ENCODE measurements at regions of chr16 and their contacts with region 1.

Region 1: GRCh38 chr16:3431779-3432219 is 11.5 kb downstream of the ZNF597 start:
- DNase-seq: peak in 7 of 10 donors; percentile 14 to 92 (median 48)

Region 2: GRCh38 chr16:3389663-3390338 is 42.0 kb before region 1 on chr16:
- intact Hi-C with region 1: no loop called
- DNase-seq: no peak

Region 3: GRCh38 chr16:3413730-3414379 is 17.9 kb before region 1 on chr16:
- intact Hi-C with region 1: loop called (anchors 2 kb)
- DNase-seq: peak in 1 of 10 donors; percentile 76

Region 4: DNA sequence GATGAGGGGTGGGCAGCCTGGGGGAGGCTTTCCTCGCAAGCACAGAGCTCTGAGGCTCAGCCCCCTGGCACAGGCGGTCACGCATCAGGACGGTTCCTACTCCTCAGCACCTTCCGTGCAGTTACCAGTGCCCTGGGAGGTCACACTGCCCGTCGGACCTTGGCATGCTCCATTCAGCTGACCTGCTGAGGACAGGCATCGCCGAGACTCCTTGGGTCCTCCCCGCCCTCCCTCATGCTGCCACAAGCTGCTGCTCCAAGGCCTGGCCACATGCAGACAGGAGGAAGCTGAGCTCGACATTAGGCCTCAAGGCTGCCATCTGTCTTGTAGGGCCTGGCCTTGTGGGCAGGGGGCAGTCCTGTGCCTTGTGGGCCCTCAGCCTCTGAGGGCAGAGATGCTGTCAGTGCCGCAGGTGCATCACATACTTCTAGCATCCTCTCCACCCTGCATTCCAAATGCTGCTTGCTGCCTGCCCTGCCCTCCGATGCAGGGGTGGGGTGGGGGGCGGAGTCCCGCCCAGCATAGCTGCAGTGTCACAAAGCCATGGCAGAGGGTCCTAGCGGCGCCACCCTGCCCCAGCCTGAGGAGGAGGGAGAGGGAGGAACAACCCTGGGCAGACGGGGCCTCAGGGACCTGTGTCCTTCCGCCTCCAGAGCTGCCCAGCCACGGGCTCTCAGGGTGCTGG is 54.2 kb after region 1 on chr16:
- intact Hi-C with region 1: no loop called
- DNase-seq: peak in 3 of 10 donors; percentile 54 to 77 (median 64)

Region 5: GRCh38 chr16:3536271-3536731 is 104.5 kb after region 1 on chr16:
- intact Hi-C with region 1: no loop called
- DNase-seq: no peak